ENCODE measurements at regions of chr20 and their contacts with region 1.

Region 1: GRCh38 chr20:34558320-34559218 is at the start of gene MAP1LC3A:
- DNase-seq: peak; percentile 92
- H3K4me3 Mint-ChIP-seq: peak within 1 kb of the TSS; percentile 83
- H3K27ac Mint-ChIP-seq: peak within 1 kb of the TSS; percentile 78
- H3K4me1 Mint-ChIP-seq: peaks cover 12% of the 10 kb centered on the region
- H3K27me3 Mint-ChIP-seq: no peaks in the 10 kb centered on the region
- total RNA-seq, gene MAP1LC3A: 6.1 and 7.3 TPM in 2 replicates

Region 2: DNA sequence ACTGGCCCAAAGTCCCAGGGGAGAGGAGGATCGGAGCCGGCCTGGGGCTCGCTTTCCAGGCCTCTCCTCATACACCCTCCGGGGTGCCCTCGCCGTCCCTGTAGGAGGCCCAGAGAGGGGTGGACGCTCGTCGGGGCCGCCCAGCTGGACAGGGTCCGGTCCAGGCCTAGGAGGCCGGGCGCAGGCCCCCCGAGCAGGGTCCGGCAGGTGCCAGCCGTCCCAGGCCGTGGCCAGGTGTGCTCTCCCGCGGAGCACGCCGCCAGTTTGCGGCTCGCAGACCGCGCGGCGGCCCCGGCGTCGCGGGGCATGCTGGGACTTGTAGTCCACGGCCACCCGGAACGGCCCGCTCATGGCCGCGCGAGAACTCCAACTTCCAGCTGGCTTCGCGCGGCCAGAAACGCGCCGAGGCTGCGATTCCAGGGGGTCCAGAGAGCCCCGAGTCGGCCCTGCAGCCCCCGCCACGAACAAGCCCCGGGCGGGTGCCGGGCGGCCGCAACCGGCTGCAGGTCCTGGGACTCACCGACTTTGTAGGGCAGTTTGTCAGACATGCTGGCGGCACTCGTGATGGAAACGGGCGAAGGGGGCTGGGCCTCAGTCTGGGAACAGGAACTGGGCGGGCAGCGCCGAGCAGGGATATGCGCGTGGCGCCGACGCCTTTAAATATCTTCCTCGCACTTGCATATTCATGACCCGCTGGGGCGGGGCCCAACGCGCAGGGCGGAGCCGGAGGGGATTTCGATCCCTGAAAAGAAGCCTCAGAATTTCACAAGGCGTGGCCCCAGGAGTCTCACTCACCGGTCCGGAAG is 255.6 kb before region 1 on chr20 and contains the start of gene AHCY:
- intact Hi-C with region 1: loop called (anchors 1 kb)
- DNase-seq: peak; percentile 93
- H3K4me3 Mint-ChIP-seq: peak within 1 kb of the TSS; percentile 83
- H3K27ac Mint-ChIP-seq: peak within 1 kb of the TSS; percentile 92
- H3K4me1 Mint-ChIP-seq: peaks cover 19% of the 10 kb centered on the region
- H3K27me3 Mint-ChIP-seq: no peaks in the 10 kb centered on the region
- total RNA-seq, gene AHCY: 130 and 132 TPM in 2 replicates

Region 3: GRCh38 chr20:34516247-34517113 is 42.1 kb before region 1 on chr20 and contains the start of gene DYNLRB1:
- intact Hi-C with region 1: loop called (anchors 1 kb)
- DNase-seq: peak; percentile 93
- H3K4me3 Mint-ChIP-seq: peak within 1 kb of the TSS; percentile 95
- H3K27ac Mint-ChIP-seq: peak within 1 kb of the TSS; percentile 96
- H3K4me1 Mint-ChIP-seq: peaks cover 35% of the 10 kb centered on the region
- H3K27me3 Mint-ChIP-seq: no peaks in the 10 kb centered on the region
- total RNA-seq, gene DYNLRB1: 92.0 and 104 TPM in 2 replicates

Region 4: GRCh38 chr20:34579979-34580940 is 21.7 kb after region 1 on chr20:
- intact Hi-C with region 1: loop called (anchors 1 kb)
- DNase-seq: peak; percentile 44
- H3K4me3 Mint-ChIP-seq: peak overlapping the region; percentile 46
- H3K27ac Mint-ChIP-seq: peak overlapping the region; percentile 54
- H3K4me1 Mint-ChIP-seq: peaks cover 39% of the 10 kb centered on the region
- H3K27me3 Mint-ChIP-seq: no peaks in the 10 kb centered on the region

Region 5: DNA sequence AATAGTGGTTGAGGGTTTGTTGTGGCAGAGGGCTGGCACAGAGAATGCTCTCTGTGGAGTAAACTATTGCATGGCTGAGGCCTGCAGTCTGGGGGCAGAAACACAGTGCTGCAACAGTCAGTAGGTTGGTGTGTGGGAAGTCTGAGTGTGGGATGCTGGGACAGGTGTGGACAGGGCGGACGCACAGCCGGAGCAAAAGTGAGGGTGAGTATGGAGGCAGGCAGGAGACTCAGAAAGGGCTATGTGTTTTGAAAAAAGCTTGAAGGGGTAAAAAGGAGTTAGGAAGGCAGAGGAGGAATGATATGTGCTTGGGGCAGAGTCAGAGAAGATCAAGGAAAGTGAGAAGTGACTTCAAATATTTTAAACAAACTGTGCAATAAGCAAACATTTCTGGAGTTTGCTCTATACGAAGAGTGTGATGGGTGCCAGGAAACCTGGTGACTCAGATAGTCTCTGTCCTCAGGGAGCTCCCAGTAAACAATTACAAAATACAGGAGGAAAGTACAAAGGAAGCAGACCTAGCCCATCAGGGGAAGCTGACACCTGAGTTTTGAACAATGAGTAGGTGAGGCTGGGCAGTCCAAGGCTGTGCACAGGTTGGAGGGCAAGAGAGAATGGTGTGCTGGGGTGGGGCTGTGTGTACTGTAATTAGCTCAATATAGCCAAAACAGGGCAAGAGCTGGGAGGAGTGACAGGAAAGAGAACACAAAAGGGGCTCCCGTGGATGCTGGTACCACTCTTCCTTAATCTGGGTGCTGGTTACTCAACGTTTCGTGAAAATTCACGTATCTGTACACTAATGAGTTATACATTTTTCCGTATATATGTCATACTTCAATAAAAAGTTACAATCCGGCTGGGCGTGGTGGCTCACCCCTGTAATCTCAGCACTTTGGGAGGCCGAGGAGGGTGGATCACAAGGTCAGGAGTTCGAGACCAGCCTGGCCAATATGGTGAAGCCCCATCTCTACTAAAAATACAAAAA is 63.1 kb after region 1 on chr20:
- intact Hi-C with region 1: loop called (anchors 10 kb)
- DNase-seq: no peak
- H3K4me3 Mint-ChIP-seq: no peak overlapping the region
- H3K27ac Mint-ChIP-seq: peak overlapping the region; percentile 32
- H3K4me1 Mint-ChIP-seq: peaks cover 47% of the 10 kb centered on the region
- H3K27me3 Mint-ChIP-seq: no peaks in the 10 kb centered on the region

Measured in activated T-helper 1 cell treated with anti-CD3 and anti-CD28 coated beads, Interleukin-12 subunit alpha, Interleukin-12 subunit beta, Interleukin-2, Interleukin-4 antibody, amounts not matched to agents 30 ng/mL and 10 ng/mL and 1 ng/mL, durations not matched to agents 14 hours and 24 hours and 36 hours (primary cell).